ENCODE measurements at regions of chr17 and their contacts with region 1.

Region 1: DNA sequence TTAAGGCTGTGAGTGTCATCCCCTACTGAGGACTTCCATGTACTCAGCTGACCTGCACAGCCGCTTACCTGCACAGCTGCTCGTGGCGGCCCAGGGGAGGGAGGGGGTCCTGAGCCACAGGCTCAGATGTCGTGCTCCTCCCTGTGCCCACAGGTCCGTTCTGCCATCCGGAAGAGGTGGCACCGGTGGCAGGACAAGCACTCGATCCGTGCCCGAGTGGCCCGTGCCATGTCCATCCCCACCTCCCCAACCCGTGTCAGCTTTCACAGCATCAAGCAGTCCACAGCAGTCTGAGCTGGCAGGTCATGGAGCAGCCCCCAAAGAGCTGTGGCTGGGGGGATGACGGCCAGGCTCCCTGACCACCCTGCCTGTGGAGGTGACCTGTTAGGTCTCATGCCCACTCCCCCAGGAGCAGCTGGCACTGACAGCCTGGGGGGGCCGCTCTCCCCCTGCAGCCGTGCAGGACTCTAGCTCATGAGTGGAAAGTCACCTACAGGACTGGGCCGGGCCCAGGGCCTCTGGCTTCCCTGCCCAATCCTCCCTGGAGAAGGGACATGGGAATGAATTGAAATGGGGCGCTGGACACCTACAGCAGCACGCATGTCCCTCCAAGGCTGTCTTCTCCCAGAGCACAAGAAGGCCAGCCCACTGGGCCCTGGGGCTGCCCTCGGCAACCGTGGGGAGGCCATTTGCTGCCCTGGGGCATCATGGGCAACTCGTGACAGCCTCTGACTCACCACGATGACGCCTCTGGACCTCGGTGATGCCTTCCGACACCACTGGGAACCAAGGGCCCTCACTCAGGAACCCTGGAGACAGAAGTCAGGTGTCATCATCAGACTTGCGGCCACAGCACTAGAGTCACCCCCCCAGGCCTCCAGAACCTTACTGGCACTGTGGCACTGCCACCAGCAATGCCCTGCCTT is 9.9 kb upstream of the SPPL2C start:
- DNase-seq: no peak
- ATAC-seq: no peak
- H3K4me3 ChIP-seq: no peak overlapping the region
- H3K27ac ChIP-seq: no peak overlapping the region
- H3K4me1 ChIP-seq: no peaks in the 10 kb centered on the region
- H3K27me3 ChIP-seq: no peaks in the 10 kb centered on the region
- CTCF ChIP-seq: no peak
- POLR2A ChIP-seq: no peak

Region 2: GRCh38 chr17:45719335-45720071 is 115.2 kb before region 1 on chr17:
- in situ Hi-C with region 1: no loop called
- intact Hi-C with region 1: loop called (anchors 10 kb)
- DNase-seq: peak; percentile 41 to 60
- ATAC-seq: peak; percentile 97 to 98
- H3K4me3 ChIP-seq: no peak overlapping the region
- H3K27ac ChIP-seq: no peak overlapping the region
- H3K4me1 ChIP-seq: peaks cover 0 to 3% of the 10 kb centered on the region in 2 donors
- H3K27me3 ChIP-seq: peaks cover 0 to 10% (median 7%) of the 10 kb centered on the region in 3 donors
- CTCF ChIP-seq: peak; percentile 51 to 65 (median 54)
- POLR2A ChIP-seq: no peak

Measured in gastrocnemius medialis (tissue), 4 donors.